ENCODE measurements at regions of chr1 and their contacts with region 1.

Region 1: DNA sequence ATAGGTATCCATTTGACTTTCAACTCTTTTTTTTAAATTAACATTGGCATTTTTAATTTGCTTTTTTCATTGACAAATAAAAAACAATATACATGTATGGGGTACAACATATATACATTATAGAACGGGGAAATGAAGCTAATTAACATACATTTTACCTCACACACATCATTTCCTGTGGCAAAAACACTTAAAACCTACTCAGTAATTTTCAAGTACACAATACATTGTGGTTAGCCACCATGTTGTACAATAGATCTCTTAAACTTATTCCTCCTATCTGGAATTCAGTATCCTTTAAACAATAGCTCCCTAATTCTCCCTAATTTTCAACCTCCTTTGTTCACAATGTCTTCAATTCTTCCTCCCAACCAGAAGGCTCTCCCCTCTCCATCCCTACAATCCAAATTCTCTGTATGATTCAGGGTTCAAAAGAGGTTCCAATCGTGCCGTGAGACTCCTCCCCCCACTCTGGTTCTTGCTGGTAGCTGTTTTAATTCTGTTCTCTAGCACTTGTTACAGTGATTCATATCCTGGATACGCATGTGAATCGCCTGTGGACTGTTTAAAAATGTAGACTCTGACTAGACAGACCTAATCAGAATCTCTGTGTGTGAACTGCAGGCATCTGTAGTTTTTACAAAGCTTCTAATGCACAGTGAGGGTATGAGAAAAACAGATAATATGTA is 87.6 kb upstream of the DUSP10 start:
- DNase-seq: peak; percentile 35 to 77 (median 41)
- H3K4me3 ChIP-seq: peak overlapping the region in 1 of 2 donors; percentile 2
- H3K4me3 Mint-ChIP-seq: peak overlapping the region; percentile 62 to 75 (median 70)
- H3K27ac ChIP-seq: peak overlapping the region; percentile 28
- H3K27ac Mint-ChIP-seq: peak overlapping the region; percentile 86 to 96 (median 93)
- H3K4me1 ChIP-seq: peaks cover 41% of the 10 kb centered on the region
- H3K4me1 Mint-ChIP-seq: peaks cover 27 to 53% (median 43%) of the 10 kb centered on the region in 4 donors
- H3K27me3 ChIP-seq: no peaks in the 10 kb centered on the region
- H3K27me3 Mint-ChIP-seq: no peaks in the 10 kb centered on the region

Region 2: GRCh38 chr1:221839796-221840395 is 10.4 kb after region 1 on chr1:
- CTCF ChIA-PET with region 1: no interaction called
- POLR2A ChIA-PET with region 1: interaction called, 13 read pairs
- intact Hi-C with region 1: loop called (anchors 1 kb)
- DNase-seq: peak; percentile 15 to 87 (median 20)
- H3K4me3 ChIP-seq: no peak overlapping the region
- H3K4me3 Mint-ChIP-seq: peak overlapping the region in 3 of 8 donors; percentile 4 to 48 (median 27)
- H3K27ac ChIP-seq: no peak overlapping the region
- H3K27ac Mint-ChIP-seq: peak overlapping the region in 5 of 7 donors; percentile 53 to 84 (median 61)
- H3K4me1 ChIP-seq: peaks cover 18% of the 10 kb centered on the region
- H3K4me1 Mint-ChIP-seq: peaks cover 5 to 26% (median 19%) of the 10 kb centered on the region in 4 donors
- H3K27me3 ChIP-seq: no peaks in the 10 kb centered on the region
- H3K27me3 Mint-ChIP-seq: no peaks in the 10 kb centered on the region

Region 3: DNA sequence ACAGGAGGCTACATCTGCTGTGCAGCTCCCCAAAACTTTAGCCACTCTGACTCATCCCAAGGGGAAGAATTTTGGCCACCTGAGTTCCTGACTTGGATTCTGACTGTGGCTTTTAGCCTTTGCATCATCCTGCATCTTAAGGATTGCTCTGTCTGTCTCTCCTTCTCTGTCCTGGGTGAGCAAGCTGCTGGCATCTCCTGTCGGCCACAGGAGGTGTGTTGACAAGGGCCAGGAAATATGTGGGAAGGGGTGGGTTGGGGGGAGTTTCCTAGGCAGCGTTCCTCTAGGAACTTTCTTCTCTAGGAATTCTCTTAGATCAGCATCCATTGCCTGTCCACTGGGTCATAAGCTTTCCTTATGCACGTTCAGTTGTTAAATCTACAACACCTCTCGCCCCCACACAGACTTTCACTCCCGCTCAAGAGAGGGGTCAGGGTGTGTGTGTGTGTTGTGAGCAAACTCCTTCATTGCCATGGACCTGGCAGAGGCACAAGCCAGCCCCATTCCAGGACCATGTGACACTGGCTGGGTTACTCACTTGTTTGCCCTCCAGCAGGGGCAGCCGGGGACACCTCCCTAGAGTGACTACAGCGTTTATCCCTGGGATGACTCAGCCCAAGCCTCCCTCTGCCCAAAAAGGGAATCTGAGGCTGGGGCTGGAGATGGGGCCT is 57.4 kb after region 1 on chr1:
- CTCF ChIA-PET with region 1: no interaction called
- POLR2A ChIA-PET with region 1: no interaction called
- intact Hi-C with region 1: no loop called
- DNase-seq: no peak
- H3K4me3 ChIP-seq: no peak overlapping the region
- H3K4me3 Mint-ChIP-seq: no peak overlapping the region
- H3K27ac ChIP-seq: no peak overlapping the region
- H3K27ac Mint-ChIP-seq: no peak overlapping the region
- H3K4me1 ChIP-seq: no peaks in the 10 kb centered on the region
- H3K4me1 Mint-ChIP-seq: no peaks in the 10 kb centered on the region
- H3K27me3 ChIP-seq: no peaks in the 10 kb centered on the region
- H3K27me3 Mint-ChIP-seq: peaks cover 3 to 5% of the 10 kb centered on the region in 2 donors

Measured in CD4-positive, alpha-beta memory T cell (primary cell).